ENCODE measurements at regions of chr21 and their contacts with region 1.

Region 1: GRCh38 chr21:31888936-31889371 is 16.1 kb downstream of the HUNK start:
- H3K4me3 ChIP-seq: peak overlapping the region; percentile 14
- H3K27ac ChIP-seq: no peak overlapping the region
- H3K4me1 ChIP-seq: peaks cover 8% of the 10 kb centered on the region
- CTCF ChIP-seq: no peak

Region 2: GRCh38 chr21:31766899-31767298 is 122.1 kb before region 1 on chr21:
- CTCF ChIA-PET with region 1: no interaction called
- POLR2A ChIA-PET with region 1: no interaction called
- H3K4me3 ChIP-seq: no peak overlapping the region
- H3K27ac ChIP-seq: no peak overlapping the region
- H3K4me1 ChIP-seq: no peaks in the 10 kb centered on the region
- CTCF ChIP-seq: no peak

Region 3: GRCh38 chr21:31855150-31855549 is 33.8 kb before region 1 on chr21:
- CTCF ChIA-PET with region 1: interaction called, 11 read pairs
- POLR2A ChIA-PET with region 1: no interaction called
- H3K4me3 ChIP-seq: no peak overlapping the region
- H3K27ac ChIP-seq: no peak overlapping the region
- H3K4me1 ChIP-seq: no peaks in the 10 kb centered on the region
- CTCF ChIP-seq: no peak

Region 4: DNA sequence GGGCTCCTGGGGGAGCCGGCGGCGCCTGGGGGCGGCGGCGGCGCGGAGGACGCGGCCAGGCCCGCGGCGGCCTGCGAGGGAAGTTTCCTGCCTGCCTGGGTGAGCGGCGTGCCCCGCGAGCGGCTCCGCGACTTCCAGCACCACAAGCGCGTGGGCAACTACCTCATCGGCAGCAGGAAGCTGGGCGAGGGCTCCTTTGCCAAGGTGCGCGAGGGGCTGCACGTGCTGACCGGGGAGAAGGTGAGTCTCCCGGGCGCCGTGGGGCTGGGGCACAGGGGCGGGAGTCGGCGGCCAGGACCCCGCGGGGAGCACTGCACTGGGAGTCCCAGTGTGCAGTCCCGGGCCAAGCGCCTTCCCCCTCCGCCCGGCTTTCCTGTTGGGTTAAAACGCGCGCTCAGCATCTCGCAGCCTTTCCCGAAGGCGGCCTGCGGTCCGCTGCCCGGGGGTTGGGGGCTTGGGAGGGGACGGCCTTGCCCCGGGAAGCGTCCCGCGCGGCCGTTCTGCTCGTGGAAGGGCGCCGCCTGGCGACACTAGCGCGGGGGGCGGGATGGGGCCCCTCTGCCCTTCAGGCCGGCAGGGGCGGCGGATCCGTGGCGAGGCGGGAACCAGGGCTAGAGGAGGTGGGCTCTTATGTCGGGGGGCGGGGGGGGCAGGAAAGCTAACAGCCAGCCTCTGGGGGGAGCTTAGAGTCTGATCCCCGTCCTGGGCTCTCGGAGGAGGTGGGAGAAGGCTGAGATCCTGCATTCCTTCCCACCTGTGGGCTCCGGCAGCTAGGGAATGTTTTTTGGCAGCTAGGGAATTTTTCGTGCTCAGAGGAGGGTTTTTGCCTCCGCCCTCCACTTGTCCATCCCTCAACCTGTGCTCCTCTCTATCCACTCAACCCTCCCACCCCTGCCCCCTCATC is 15.0 kb before region 1 on chr21:
- CTCF ChIA-PET with region 1: interaction called, 20 read pairs
- POLR2A ChIA-PET with region 1: interaction called, 14 read pairs
- H3K4me3 ChIP-seq: peak overlapping the region; percentile 75
- H3K27ac ChIP-seq: peak overlapping the region; percentile 81; the same call in 1 of the 2 replicates
- H3K4me1 ChIP-seq: peaks cover 5% of the 10 kb centered on the region; the same call in 1 of the 2 replicates
- CTCF ChIP-seq: peak; percentile 94

Region 5: DNA sequence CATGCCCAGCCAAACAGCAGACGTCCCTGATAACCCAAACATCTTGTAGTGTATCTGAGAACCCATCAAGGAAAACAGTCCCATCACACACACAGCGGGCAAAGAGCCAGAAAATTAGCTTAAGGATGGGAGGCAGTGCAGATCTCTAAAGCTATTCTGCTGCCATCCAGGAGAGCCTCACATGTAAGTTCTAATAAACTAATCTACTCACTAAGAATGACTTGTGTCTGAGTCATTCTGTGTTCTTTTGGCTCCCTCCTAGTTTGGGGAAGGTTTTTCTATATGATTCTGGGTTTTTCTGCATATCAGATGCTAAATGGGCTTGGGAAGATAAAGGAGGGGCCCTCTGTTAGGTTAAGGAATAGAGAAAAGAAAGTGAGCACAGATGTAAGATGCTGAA is 146.7 kb after region 1 on chr21:
- CTCF ChIA-PET with region 1: no interaction called
- POLR2A ChIA-PET with region 1: no interaction called
- H3K4me3 ChIP-seq: no peak overlapping the region
- H3K27ac ChIP-seq: no peak overlapping the region
- H3K4me1 ChIP-seq: no peaks in the 10 kb centered on the region
- CTCF ChIP-seq: no peak